ENCODE measurements at regions of chr15 and their contacts with region 1.

Region 1: GRCh38 chr15:98671060-98672008 is 23.0 kb downstream of the IGF1R start:
- DNase-seq: no peak
- H3K4me3 ChIP-seq: no peak overlapping the region
- H3K27ac ChIP-seq: peak overlapping the region; percentile 69
- H3K27me3 ChIP-seq: no peaks in the 10 kb centered on the region
- CTCF ChIP-seq: no peak

Region 2: GRCh38 chr15:98658831-98659699 is 12.3 kb before region 1 on chr15:
- CTCF ChIA-PET with region 1: interaction called, 24 read pairs
- POLR2A ChIA-PET with region 1: no interaction called
- DNase-seq: no peak
- H3K4me3 ChIP-seq: no peak overlapping the region
- H3K27ac ChIP-seq: no peak overlapping the region
- H3K27me3 ChIP-seq: no peaks in the 10 kb centered on the region
- CTCF ChIP-seq: peak; percentile 93

Measured in AG04450 (cell line).